Kidney (tissue), 22 donors: ENCODE measurements at regions of chr1 and their contacts with region 1.

Region 1: GRCh38 chr1:57910782-57911181 is 486.9 kb upstream of the DAB1 start:
- DNase-seq: no peak
- H3K4me3 ChIP-seq: no peak overlapping the region
- H3K27ac ChIP-seq: no peak overlapping the region
- H3K4me1 ChIP-seq: no peaks in the 10 kb centered on the region
- H3K27me3 ChIP-seq: no peaks in the 10 kb centered on the region
- CTCF ChIP-seq: no peak

Region 2: DNA sequence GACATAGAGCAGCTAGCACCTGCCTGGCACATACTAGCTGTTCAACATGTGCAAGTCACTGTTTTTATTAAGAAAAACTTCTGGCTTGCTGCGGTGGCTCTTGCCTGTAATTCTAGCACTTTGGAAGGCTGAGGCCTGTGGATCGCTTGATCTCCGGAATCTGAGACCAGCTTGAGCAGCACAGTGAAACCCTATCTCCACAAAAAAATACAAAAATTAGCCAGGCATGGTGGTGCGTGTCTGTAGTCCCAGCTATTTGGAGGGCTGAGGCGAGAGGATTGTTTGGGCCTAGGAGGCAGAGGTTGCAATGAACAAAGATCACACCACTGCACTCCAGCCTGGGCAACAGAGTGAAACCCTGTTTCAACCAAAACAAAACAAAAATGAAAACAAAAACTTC is 917.3 kb before region 1 on chr1:
- intact Hi-C with region 1: loop called (anchors 10 kb)
- DNase-seq: peak in 4 of 5 donors; percentile 55 to 90 (median 80)
- H3K4me3 ChIP-seq: no peak overlapping the region
- H3K27ac ChIP-seq: no peak overlapping the region
- H3K4me1 ChIP-seq: peaks cover 0 to 7% (median 0%) of the 10 kb centered on the region in 3 donors
- H3K27me3 ChIP-seq: no peaks in the 10 kb centered on the region
- CTCF ChIP-seq: no peak